ENCODE measurements at regions of chr15 and their contacts with region 1.

Region 1: GRCh38 chr15:59976480-59977271 is 27.4 kb upstream of the FOXB1 start:
- DNase-seq: no peak
- H3K4me3 ChIP-seq: no peak overlapping the region
- CTCF ChIP-seq: no peak
- POLR2A ChIP-seq: no peak

Region 2: GRCh38 chr15:59924812-59925522 is 51.7 kb before region 1 on chr15:
- intact Hi-C with region 1: loop called (anchors 2 kb)
- DNase-seq: no peak
- H3K4me3 ChIP-seq: no peak overlapping the region
- CTCF ChIP-seq: no peak
- POLR2A ChIP-seq: no peak